Heart right ventricle (tissue), 16 donors: ENCODE measurements at regions of chr1 and their contacts with region 1.

Region 1: GRCh38 chr1:85398391-85399064 is 66.4 kb downstream of the DDAH1 start:
- DNase-seq: no peak
- ATAC-seq: peak in 4 of 8 donors; percentile 40 to 56 (median 45)
- H3K4me3 ChIP-seq: no peak overlapping the region
- H3K27ac ChIP-seq: peak overlapping the region in 1 of 10 donors; percentile 12
- H3K4me1 ChIP-seq: peaks cover 0 to 16% (median 0%) of the 10 kb centered on the region in 9 donors
- H3K27me3 ChIP-seq: no peaks in the 10 kb centered on the region
- CTCF ChIP-seq: peak; percentile 19 to 62 (median 36)

Region 2: GRCh38 chr1:85344256-85344694 is 54.3 kb before region 1 on chr1:
- intact Hi-C with region 1: loop called in 3 of 10 experiments (anchors 5 to 10 kb)
- DNase-seq: no peak
- ATAC-seq: peak in 5 of 8 donors; percentile 65 to 73 (median 72)
- H3K4me3 ChIP-seq: no peak overlapping the region
- H3K27ac ChIP-seq: peak overlapping the region in 4 of 10 donors; percentile 26 to 66 (median 38)
- H3K4me1 ChIP-seq: peaks cover 0 to 40% (median 24%) of the 10 kb centered on the region in 9 donors
- H3K27me3 ChIP-seq: no peaks in the 10 kb centered on the region
- CTCF ChIP-seq: peak in 7 of 9 donors; percentile 35 to 70 (median 55)